Activated CD8-positive, alpha-beta T cell treated with anti-CD3 and anti-CD28 coated beads, Interleukin-2, amount 10 ng/mL, durations not matched to agents 7 days and 5 days (primary cell): ENCODE measurements at regions of chr16 and their contacts with region 1.

Region 1: DNA sequence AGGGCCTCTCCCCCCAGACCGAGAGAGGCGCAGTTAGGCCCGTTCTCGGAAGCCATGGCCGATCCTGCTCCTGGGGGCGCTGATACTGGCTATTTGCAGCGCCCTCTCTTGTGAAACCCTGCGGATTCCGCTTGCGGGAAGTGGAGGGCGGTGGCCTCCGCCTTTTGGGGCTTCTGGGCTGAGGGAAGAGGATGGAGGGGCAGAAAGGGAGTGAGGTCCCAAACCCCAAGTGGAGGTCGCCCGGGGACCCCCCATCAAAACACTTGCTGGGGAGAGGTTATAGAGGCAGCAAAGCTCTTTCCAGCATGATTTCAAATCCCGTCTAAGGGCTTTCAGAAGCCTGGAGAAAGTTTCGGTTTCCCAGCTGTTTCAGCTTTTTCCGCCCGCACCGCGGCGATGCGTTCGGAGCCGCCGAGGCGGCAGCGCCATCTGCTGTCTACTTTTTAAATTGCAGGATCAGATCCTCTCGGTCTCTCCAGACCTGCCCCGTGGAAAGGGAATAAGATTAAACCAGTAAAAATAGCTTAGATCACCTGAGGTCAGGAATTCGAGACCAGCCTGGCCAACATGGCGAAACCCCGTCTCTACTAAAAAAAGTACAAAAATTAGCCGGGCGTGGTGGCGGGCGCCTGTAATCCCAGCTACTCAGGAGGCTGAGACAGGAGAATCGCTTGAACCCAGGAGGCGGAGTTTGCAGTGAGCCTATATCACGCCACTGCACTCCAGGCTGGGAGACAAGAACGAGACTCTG is 15.8 kb downstream of the SNX20 start:
- DNase-seq: peak; percentile 91
- ATAC-seq: peak; percentile 56
- H3K4me3 Mint-ChIP-seq: peak overlapping the region; percentile 64
- H3K27ac Mint-ChIP-seq: peak overlapping the region; percentile 87
- H3K4me1 Mint-ChIP-seq: peaks cover 49% of the 10 kb centered on the region
- H3K27me3 Mint-ChIP-seq: no peaks in the 10 kb centered on the region

Region 2: GRCh38 chr16:50210266-50211038 is 454.9 kb before region 1 on chr16:
- CTCF ChIA-PET with region 1: interaction called, 59 read pairs
- POLR2A ChIA-PET with region 1: no interaction called
- DNase-seq: peak; percentile 80
- ATAC-seq: peak; percentile 95
- H3K4me3 Mint-ChIP-seq: no peak overlapping the region
- H3K27ac Mint-ChIP-seq: peak overlapping the region; percentile 41
- H3K4me1 Mint-ChIP-seq: peaks cover 32% of the 10 kb centered on the region
- H3K27me3 Mint-ChIP-seq: no peaks in the 10 kb centered on the region

Region 3: GRCh38 chr16:50360033-50360778 is 305.1 kb before region 1 on chr16:
- CTCF ChIA-PET with region 1: interaction called, 61 read pairs
- POLR2A ChIA-PET with region 1: interaction called, 3 read pairs
- DNase-seq: no peak
- ATAC-seq: no peak
- H3K4me3 Mint-ChIP-seq: no peak overlapping the region
- H3K27ac Mint-ChIP-seq: peak overlapping the region; percentile 9
- H3K4me1 Mint-ChIP-seq: peaks cover 41% of the 10 kb centered on the region
- H3K27me3 Mint-ChIP-seq: no peaks in the 10 kb centered on the region

Region 4: GRCh38 chr16:50611332-50611934 is 53.9 kb before region 1 on chr16:
- CTCF ChIA-PET with region 1: interaction called, 18 read pairs
- POLR2A ChIA-PET with region 1: no interaction called
- DNase-seq: no peak
- ATAC-seq: peak; percentile 35
- H3K4me3 Mint-ChIP-seq: no peak overlapping the region
- H3K27ac Mint-ChIP-seq: no peak overlapping the region
- H3K4me1 Mint-ChIP-seq: peaks cover 4% of the 10 kb centered on the region
- H3K27me3 Mint-ChIP-seq: no peaks in the 10 kb centered on the region

Region 5: GRCh38 chr16:50719518-50720337 is 54.4 kb after region 1 on chr16:
- CTCF ChIA-PET with region 1: interaction called, 27 read pairs
- POLR2A ChIA-PET with region 1: no interaction called
- DNase-seq: peak; percentile 38
- ATAC-seq: peak; percentile 73
- H3K4me3 Mint-ChIP-seq: no peak overlapping the region
- H3K27ac Mint-ChIP-seq: peak overlapping the region; percentile 75
- H3K4me1 Mint-ChIP-seq: peaks cover 45% of the 10 kb centered on the region
- H3K27me3 Mint-ChIP-seq: no peaks in the 10 kb centered on the region

Region 6: DNA sequence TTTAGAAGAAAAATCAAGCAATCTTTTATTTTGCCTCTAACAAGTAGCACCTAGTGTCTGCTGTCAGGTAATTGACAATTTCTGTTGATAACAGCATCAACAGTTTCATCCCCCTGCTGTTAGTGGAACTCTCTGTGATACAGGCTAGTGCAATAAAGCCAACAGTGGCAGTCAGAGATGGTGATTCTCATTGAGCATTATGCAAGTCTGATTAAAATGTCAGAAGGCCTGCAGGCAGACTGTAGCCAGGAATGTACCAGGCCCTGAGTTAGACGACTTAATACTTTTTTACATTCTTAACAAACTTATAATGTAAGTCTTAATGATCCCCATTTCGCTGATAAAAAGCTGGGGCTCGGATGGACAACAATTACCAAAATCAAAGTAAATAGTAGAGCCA is 91.2 kb after region 1 on chr16:
- CTCF ChIA-PET with region 1: interaction called, 567 read pairs
- POLR2A ChIA-PET with region 1: no interaction called
- DNase-seq: no peak
- ATAC-seq: no peak
- H3K4me3 Mint-ChIP-seq: no peak overlapping the region
- H3K27ac Mint-ChIP-seq: no peak overlapping the region
- H3K4me1 Mint-ChIP-seq: peaks cover 48% of the 10 kb centered on the region
- H3K27me3 Mint-ChIP-seq: no peaks in the 10 kb centered on the region